Psoas muscle (tissue), 8 donors: ENCODE measurements at regions of chr4 and their contacts with region 1.

Region 1: GRCh38 chr4:159446266-159446976 is 343.5 kb downstream of the RAPGEF2 start:
- DNase-seq: no peak
- ATAC-seq: peak; percentile 87 to 99 (median 96)
- H3K4me3 ChIP-seq: no peak overlapping the region
- H3K27ac ChIP-seq: no peak overlapping the region
- H3K4me1 ChIP-seq: no peaks in the 10 kb centered on the region
- H3K27me3 ChIP-seq: no peaks in the 10 kb centered on the region
- CTCF ChIP-seq: peak; percentile 89

Region 2: DNA sequence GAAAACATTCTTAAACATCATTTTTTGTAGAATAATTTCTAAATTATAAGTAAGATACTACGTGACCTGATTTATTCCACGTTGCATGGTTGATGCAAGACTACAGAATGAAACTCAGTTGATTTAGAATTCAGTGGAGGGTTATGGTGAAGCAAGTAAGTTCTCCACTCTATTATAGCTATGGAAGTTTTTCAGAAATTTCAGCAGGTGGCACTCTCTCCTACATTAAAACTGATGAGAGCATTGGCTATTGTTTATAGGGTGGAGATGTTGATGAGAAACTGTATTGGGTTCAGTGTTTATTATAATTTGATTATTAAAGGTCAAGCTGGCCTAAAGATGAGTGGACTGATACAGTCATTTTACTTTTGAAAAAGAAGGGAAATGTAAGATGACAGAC is 589.6 kb before region 1 on chr4:
- intact Hi-C with region 1: loop called (anchors 5 to 10 kb)
- DNase-seq: no peak
- ATAC-seq: peak; percentile 36 to 58 (median 48)
- H3K4me3 ChIP-seq: no peak overlapping the region
- H3K27ac ChIP-seq: no peak overlapping the region
- H3K4me1 ChIP-seq: no peaks in the 10 kb centered on the region
- H3K27me3 ChIP-seq: no peaks in the 10 kb centered on the region
- CTCF ChIP-seq: peak; percentile 52

Region 3: GRCh38 chr4:159175085-159175988 is 271.1 kb before region 1 on chr4:
- intact Hi-C with region 1: no loop called
- DNase-seq: peak; percentile 29 to 62
- ATAC-seq: peak; percentile 84 to 93 (median 86)
- H3K4me3 ChIP-seq: no peak overlapping the region
- H3K27ac ChIP-seq: no peak overlapping the region
- H3K4me1 ChIP-seq: peaks cover 66% of the 10 kb centered on the region
- H3K27me3 ChIP-seq: no peaks in the 10 kb centered on the region
- CTCF ChIP-seq: peak; percentile 88

Region 4: GRCh38 chr4:159547645-159548308 is 101.4 kb after region 1 on chr4:
- intact Hi-C with region 1: no loop called
- DNase-seq: no peak
- ATAC-seq: no peak
- H3K4me3 ChIP-seq: no peak overlapping the region
- H3K27ac ChIP-seq: no peak overlapping the region
- H3K4me1 ChIP-seq: no peaks in the 10 kb centered on the region
- H3K27me3 ChIP-seq: peaks cover 0 to 3% (median 0%) of the 10 kb centered on the region in 3 donors
- CTCF ChIP-seq: no peak